ENCODE measurements at regions of chr2 and their contacts with region 1.

Region 1: GRCh38 chr2:54287532-54287931 is 31.5 kb upstream of the TSPYL6 start:
- DNase-seq: peak in 1 of 10 donors; percentile 14
- H3K4me3 ChIP-seq: no peak overlapping the region
- H3K27ac ChIP-seq: peak overlapping the region in 9 of 59 donors; percentile 12 to 53 (median 22)
- H3K27me3 ChIP-seq: no peaks in the 10 kb centered on the region
- CTCF ChIP-seq: no peak

Region 2: DNA sequence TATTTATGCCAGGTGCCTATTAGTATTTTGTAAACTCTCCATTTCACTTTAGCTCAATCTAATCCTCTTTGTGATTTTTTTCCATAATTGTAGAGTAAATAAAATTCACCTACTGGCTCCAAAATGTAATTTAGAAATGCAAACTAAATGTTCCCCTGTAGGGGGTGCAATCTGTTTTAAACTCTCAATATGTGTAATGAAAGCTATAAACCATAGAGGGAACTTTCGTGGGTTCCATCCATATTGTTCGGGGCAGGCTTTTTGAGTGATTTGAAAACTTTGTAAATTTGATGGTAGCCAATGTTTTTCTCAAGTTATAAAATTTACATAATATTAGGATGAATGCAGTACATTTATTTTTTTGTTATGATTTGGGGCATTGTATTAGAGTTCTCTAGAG is 80.9 kb before region 1 on chr2:
- intact Hi-C with region 1: loop called in 1 of 2 experiments (anchors 5 kb)
- DNase-seq: no peak
- H3K4me3 ChIP-seq: peak overlapping the region in 15 of 59 donors; percentile 2 to 41 (median 22)
- H3K27ac ChIP-seq: peak overlapping the region in 12 of 59 donors; percentile 4 to 48 (median 24)
- H3K27me3 ChIP-seq: no peaks in the 10 kb centered on the region
- CTCF ChIP-seq: peak; percentile 57 to 91 (median 78)

Region 3: GRCh38 chr2:54321047-54321446 is 33.5 kb after region 1 on chr2:
- intact Hi-C with region 1: loop called in 1 of 2 experiments (anchors 5 kb)
- DNase-seq: no peak
- H3K4me3 ChIP-seq: no peak overlapping the region
- H3K27ac ChIP-seq: no peak overlapping the region
- H3K27me3 ChIP-seq: no peaks in the 10 kb centered on the region
- CTCF ChIP-seq: no peak